Activated T-helper 1 cell treated with anti-CD3 and anti-CD28 coated beads, Interleukin-12 subunit alpha, Interleukin-12 subunit beta, Interleukin-2, Interleukin-4 antibody, amounts not matched to agents 30 ng/mL and 10 ng/mL and 1 ng/mL, durations not matched to agents 14 hours and 24 hours and 36 hours (primary cell): ENCODE measurements at regions of chr10 and their contacts with region 1.

Region 1: GRCh38 chr10:62816331-62817120 is at the start of gene EGR2:
- DNase-seq: peak; percentile 94
- H3K4me3 Mint-ChIP-seq: peak within 1 kb of the TSS; percentile 98
- H3K27ac Mint-ChIP-seq: peak within 1 kb of the TSS; percentile 98
- H3K4me1 Mint-ChIP-seq: peaks cover 58% of the 10 kb centered on the region
- H3K27me3 Mint-ChIP-seq: peaks cover 38% of the 10 kb centered on the region
- total RNA-seq, gene EGR2: 268 and 282 TPM in 2 replicates

Region 2: DNA sequence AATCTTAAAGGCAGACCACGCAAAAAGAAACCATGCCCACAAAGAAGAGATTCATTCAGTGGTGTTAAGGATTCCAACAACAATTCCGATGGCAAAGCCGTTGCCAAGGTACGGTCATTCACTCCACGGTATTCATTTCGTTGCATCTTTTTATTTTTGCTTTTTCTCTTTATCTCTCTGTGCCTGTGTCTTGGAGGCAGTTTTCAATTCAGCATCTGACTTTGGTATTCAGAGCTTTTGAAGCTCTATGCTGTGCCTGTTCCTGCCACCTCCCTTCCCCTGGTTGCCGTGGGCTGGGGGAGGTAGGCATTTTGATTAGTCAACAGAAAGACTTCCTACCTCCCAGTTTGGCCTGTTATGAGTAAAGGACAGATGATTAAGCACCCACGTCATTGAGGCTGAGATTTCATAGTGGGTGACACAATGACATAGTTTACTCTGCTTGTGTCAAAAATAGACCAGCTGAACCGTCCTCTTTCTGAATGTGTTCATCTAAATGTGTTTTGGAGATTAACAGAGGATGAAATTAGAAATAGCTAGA is 765.6 kb before region 1 on chr10:
- intact Hi-C with region 1: loop called (anchors 1 kb)
- DNase-seq: peak; percentile 77
- H3K4me3 Mint-ChIP-seq: peak overlapping the region; percentile 96
- H3K27ac Mint-ChIP-seq: peak overlapping the region; percentile 99
- H3K4me1 Mint-ChIP-seq: peaks cover 86% of the 10 kb centered on the region
- H3K27me3 Mint-ChIP-seq: no peaks in the 10 kb centered on the region

Region 3: GRCh38 chr10:62594093-62594520 is 222.4 kb before region 1 on chr10:
- intact Hi-C with region 1: loop called (anchors 1 kb)
- DNase-seq: peak; percentile 27
- H3K4me3 Mint-ChIP-seq: no peak overlapping the region
- H3K27ac Mint-ChIP-seq: no peak overlapping the region
- H3K4me1 Mint-ChIP-seq: peaks cover 19% of the 10 kb centered on the region
- H3K27me3 Mint-ChIP-seq: peaks cover 23% of the 10 kb centered on the region

Region 4: DNA sequence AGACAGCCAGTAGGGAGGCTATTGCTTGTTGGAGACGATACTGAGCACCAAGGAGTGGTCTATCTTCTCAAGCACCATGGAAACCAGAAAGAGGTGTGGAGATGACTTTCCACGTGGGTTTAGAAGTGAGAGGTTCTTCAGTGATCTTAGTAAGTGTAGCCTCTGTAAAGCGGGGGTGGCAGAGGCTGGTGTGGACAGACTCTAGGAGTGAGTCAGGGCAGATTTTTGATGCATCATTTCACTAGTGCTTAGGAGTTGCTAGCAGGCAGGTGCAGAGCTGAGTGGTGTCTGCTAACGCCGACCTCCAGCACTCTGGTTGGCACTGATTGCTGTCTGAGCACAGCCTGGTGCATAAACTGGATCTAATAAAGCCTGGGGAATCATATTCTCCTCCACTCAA is 90.4 kb before region 1 on chr10:
- intact Hi-C with region 1: loop called (anchors 1 kb)
- DNase-seq: peak; percentile 16
- H3K4me3 Mint-ChIP-seq: peak overlapping the region; percentile 25
- H3K27ac Mint-ChIP-seq: peak overlapping the region; percentile 72
- H3K4me1 Mint-ChIP-seq: peaks cover 52% of the 10 kb centered on the region
- H3K27me3 Mint-ChIP-seq: peaks cover 8% of the 10 kb centered on the region

Region 5: DNA sequence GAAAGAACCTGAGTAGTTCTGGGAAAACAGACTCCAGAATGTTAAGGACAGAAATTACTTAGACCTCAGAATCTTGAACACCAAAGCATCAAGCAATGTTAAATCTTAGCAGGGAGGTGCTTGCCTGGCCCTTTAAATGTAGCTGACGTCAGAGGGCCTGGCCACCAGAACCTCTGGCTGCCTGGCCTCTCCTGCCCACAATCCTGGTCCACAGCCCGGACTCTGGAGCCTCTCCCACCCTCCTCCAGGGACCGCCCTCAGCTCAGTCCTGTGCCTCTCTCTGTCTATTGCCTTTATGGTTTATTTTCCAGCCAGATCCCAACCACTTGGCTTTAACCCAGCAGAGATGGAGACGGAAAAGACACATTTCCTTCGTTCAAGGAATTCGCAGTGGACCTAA is 41.8 kb after region 1 on chr10:
- intact Hi-C with region 1: loop called (anchors 1 kb)
- DNase-seq: no peak
- H3K4me3 Mint-ChIP-seq: no peak overlapping the region
- H3K27ac Mint-ChIP-seq: no peak overlapping the region
- H3K4me1 Mint-ChIP-seq: peaks cover 60% of the 10 kb centered on the region
- H3K27me3 Mint-ChIP-seq: peaks cover 6% of the 10 kb centered on the region

Region 6: GRCh38 chr10:63133056-63133820 is 316.7 kb after region 1 on chr10 and contains the start of gene NRBF2:
- intact Hi-C with region 1: loop called (anchors 1 kb)
- DNase-seq: peak; percentile 97
- H3K4me3 Mint-ChIP-seq: peak within 1 kb of the TSS; percentile 91
- H3K27ac Mint-ChIP-seq: peak within 1 kb of the TSS; percentile 83
- H3K4me1 Mint-ChIP-seq: peaks cover 32% of the 10 kb centered on the region
- H3K27me3 Mint-ChIP-seq: peaks cover 3% of the 10 kb centered on the region
- total RNA-seq, gene NRBF2: 30.0 and 30.8 TPM in 2 replicates

Region 7: DNA sequence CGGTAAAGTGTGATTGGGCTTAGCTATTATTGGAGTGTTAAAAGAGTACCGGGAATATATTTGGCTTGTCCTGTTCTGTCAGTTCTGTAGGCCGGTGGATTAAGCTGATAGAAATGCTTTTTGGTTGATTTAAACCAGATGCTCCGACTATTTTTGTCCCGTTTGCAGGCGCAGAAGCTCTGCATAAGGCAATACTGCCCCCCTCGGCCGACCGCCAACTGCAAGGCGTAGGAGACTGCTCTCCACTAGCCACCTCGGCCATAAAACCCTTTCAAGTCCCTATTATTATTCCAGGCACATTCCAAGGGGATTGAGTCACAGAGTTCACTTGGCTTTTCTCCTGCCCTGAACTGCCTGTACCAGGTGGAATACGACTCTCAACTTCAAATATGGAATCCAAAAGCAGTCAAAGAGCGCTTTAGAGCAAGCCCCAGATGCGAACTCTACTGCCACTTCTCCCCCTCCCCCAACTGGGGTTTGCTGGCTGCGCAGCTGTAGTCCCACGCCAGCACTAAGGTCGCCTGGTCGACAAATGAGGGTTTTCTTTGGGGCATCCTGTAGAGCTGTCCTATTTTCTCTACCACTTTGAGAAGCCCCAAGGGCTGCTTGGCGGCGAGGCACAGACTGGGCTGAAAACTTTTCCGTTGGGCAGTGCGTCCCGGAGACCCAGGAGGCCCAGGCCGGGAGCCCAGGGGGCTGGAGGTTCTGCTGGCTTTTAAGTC is 813.0 kb after region 1 on chr10:
- intact Hi-C with region 1: loop called (anchors 5 kb)
- DNase-seq: peak; percentile 71
- H3K4me3 Mint-ChIP-seq: peak overlapping the region; percentile 89
- H3K27ac Mint-ChIP-seq: peak overlapping the region; percentile 90
- H3K4me1 Mint-ChIP-seq: peaks cover 37% of the 10 kb centered on the region
- H3K27me3 Mint-ChIP-seq: no peaks in the 10 kb centered on the region